ENCODE measurements at regions of chr21 and their contacts with region 1.

Region 1: DNA sequence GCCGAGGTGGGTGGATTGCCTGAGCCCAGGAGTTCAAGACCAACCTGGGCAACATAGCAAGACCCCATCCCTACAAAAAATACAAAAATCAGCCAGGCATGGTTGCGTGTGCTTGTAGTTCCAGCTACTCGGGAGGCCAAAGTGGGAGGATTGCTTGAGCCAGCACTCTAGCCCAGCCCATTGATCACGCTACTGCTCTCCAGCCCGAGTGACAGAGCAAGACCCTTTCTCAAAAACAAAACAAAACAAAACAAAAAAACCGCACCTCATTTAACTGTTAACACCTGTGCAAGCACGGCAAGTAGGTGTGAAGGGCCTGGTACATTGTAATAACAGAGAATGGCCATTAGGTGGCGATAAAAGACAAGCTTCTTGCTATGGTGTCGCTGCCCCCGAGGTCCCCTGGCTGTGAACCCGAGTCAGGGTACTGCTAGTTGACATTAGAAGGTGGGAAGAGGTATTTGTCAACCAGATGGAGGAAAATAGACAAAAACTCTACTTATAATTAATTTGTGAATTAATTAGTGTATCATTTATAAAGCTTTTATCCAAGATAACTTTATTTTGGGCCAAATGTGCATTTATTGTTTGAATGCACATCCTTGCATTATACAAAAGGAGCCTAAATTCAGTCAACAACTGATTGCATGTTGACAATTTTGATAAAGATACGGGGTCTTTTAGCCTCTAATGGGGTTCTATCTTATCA is 66.5 kb downstream of the SH3BGR start:
- DNase-seq: peak; percentile 72
- H3K4me3 ChIP-seq: no peak overlapping the region
- H3K27ac ChIP-seq: no peak overlapping the region
- H3K4me1 ChIP-seq: no peaks in the 10 kb centered on the region
- H3K27me3 ChIP-seq: no peaks in the 10 kb centered on the region
- CTCF ChIP-seq: peak; percentile 89

Region 2: DNA sequence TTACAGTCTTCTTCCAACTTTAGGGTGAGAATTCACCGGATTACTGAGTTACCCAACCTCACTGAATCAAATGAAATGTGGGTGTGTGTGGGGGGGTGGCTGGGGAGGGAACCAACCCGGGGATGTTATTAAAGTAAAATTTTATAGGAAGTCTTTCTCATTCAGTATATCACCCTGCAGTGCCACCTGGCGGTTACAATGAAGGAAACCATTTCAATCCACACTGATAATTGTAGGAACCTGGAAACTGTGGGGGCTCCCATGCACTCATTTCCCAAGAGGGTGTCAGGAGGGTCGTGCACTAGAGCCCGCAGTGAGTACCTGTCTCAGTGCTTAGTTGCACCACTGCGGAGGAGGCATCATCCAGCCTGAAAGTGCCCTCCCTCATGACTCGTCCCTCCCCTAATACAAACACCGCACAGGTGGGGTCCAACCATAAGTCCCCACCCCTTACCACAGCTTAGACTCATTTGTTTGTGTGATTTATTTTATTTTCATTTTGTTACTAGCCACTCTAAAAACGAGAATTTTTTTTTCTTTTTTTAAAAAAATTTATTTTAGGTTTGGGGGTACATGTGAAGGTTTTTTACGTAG is 197.6 kb after region 1 on chr21:
- CTCF ChIA-PET with region 1: interaction called, 4 read pairs
- POLR2A ChIA-PET with region 1: no interaction called
- intact Hi-C with region 1: loop called (anchors 1 kb)
- DNase-seq: peak; percentile 58
- H3K4me3 ChIP-seq: no peak overlapping the region
- H3K27ac ChIP-seq: no peak overlapping the region
- H3K4me1 ChIP-seq: no peaks in the 10 kb centered on the region
- H3K27me3 ChIP-seq: no peaks in the 10 kb centered on the region
- CTCF ChIP-seq: peak; percentile 70